ENCODE measurements at regions of chr6 and their contacts with region 1.

Region 1: DNA sequence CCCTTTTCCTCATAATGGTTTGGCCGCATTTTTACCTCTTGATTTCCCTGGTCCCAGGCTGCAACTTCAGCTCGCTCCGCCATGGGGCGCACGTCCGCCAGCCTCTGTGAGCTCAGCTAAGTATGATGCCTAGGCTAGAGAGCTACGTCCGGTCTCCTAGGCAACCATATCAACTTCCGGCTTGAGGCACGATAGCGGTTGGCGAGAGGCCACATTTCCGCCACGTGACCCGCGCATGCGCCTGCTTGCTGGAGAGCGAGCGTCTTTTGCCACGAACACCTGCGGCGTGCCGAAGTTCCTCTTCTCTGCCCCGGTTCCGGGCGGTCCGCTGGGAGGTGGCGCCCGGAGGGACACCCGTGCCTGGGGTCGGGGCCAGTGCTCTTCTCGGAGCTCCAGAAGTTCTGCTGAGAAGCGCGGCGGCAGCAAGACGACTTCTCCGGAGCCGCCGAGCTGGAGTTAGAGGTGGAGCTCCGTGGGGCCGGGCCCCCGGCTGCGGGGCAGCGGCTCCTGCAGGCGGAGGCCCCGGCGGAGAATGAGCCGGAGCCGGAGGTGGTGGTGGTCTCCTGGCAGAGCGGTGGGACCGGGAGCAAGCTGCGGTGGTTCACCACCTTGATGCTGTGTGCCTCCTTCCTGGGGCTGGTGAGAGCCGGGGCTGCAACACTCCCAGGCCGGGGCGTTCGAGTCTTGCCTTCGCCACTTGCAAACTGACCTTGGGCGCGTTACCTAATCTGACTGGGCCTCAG is 172.0 kb downstream of the SLC16A10 start:
- DNase-seq: peak; percentile 98 to 99
- ATAC-seq: peak; percentile 96

Region 2: DNA sequence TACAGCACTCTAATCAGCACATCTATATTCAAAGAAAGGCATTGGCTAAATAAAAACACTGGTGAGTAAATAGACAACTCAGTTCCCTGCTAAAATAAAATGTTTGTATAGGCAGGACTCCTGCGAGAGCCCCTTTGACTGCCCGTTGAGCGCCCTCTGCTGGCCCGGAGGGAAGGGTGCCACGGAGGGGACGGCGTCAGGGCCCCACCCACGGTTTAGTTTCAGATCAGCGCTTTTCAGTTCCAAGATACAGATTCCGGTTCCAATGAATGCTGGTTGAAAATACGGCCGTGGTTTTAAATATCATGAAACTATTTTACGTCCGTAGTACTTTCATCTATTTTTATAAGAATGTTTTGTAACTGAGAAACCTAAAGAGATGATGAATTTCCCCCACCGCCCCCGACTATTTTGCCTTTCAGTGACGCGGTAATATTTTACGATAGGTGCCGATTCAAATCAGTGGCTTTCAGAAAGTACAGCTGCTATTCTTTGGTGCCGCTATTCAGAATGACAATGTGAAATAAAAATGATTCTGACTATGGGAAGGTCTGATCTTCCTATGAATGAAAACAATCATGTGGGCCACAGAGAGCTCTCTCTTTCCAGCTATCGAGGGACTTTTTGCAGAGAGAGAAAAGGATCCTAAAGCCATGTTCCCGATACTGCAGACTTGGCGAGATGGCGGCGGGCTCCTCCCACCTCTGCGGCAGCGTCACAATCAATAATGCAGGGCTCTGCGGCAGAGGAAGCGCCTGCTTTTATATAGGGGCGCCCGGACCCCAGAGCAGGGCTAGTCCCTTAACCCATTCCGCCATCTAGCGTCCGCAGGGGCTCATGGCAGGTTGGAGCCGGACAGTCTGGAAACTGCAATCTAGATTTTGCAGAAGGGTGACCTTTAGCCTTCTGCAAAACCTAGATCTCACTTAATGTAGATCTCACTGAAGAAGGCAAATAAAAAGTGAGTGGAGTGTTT is 784.1 kb after region 1 on chr6:
- intact Hi-C with region 1: loop called in 1 of 2 experiments (anchors 5 kb)
- DNase-seq: peak; percentile 83 to 91
- ATAC-seq: peak; percentile 95

Measured in left colon (tissue), 2 donors.